ENCODE measurements at regions of chr2 and their contacts with region 1.

Region 1: GRCh38 chr2:126657636-126658318 is 1.8 kb downstream of the GYPC start:
- DNase-seq: peak; percentile 26
- H3K4me3 ChIP-seq: peak overlapping the region; percentile 45 to 56
- H3K27ac ChIP-seq: peak overlapping the region; percentile 85 to 94
- H3K4me1 ChIP-seq: no peaks in the 10 kb centered on the region
- H3K27me3 ChIP-seq: no peaks in the 10 kb centered on the region
- CTCF ChIP-seq: no peak
- POLR2A ChIP-seq: no peak

Region 2: GRCh38 chr2:126534478-126534877 is 123.3 kb before region 1 on chr2:
- intact Hi-C with region 1: no loop called
- DNase-seq: no peak
- H3K4me3 ChIP-seq: no peak overlapping the region
- H3K27ac ChIP-seq: no peak overlapping the region
- H3K4me1 ChIP-seq: no peaks in the 10 kb centered on the region
- H3K27me3 ChIP-seq: no peaks in the 10 kb centered on the region
- CTCF ChIP-seq: no peak
- POLR2A ChIP-seq: no peak

Region 3: DNA sequence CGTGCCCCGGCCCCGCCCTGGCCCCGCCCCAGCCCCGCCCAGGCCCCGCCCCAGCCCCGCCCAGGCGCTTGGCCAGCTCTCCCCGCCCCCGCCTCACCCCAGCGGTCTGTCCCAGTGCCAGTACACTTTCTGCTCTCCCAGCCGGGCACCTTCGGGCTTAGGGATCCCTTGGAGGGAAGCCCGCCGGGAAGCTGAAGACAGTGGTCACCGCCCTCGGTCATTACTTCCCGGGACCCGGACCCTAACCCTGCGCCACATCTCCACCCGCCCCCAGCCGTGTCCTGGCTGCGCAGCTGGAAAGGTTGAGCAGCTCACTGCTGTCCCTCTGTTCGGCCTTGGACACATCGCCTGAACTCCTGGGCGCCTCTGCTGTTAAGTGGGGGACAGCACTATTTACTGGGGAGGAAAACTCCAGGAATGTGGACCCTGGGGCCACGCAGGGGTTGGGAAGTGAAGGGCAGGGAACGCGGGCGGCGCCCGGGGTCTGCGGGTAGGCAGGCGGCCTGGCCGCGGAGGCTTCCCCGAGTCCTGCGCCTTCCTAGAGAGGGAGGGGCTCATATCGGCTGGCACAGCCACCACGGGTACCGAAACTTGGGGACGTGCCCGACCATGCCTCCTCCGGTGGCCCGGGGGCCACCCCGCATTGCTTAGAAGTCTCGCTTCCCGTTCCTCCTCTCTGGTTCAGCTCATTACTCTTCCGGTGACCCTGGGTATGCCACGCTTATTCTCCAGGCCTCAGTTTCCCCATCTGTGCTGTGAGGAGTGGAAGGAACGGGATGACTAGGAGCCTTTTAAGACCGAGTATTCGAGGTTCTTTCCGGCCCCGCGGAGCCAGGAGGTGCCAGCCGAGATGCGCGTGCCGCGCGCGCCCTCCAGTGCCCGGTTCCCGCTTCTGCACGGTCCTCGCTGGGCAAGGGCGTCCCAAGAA is 119.2 kb after region 1 on chr2:
- intact Hi-C with region 1: loop called (anchors 5 kb)
- DNase-seq: peak; percentile 63
- H3K4me3 ChIP-seq: peak overlapping the region; percentile 32 to 34
- H3K27ac ChIP-seq: peak overlapping the region in 1 of 2 donors; percentile 39
- H3K4me1 ChIP-seq: no peaks in the 10 kb centered on the region
- H3K27me3 ChIP-seq: no peaks in the 10 kb centered on the region
- CTCF ChIP-seq: peak; percentile 55 to 84 (median 72)
- POLR2A ChIP-seq: no peak

Region 4: GRCh38 chr2:126986631-126987187 is 328.9 kb after region 1 on chr2:
- intact Hi-C with region 1: no loop called
- DNase-seq: no peak
- H3K4me3 ChIP-seq: no peak overlapping the region
- H3K27ac ChIP-seq: no peak overlapping the region
- H3K4me1 ChIP-seq: no peaks in the 10 kb centered on the region
- H3K27me3 ChIP-seq: peaks cover 5% of the 10 kb centered on the region
- CTCF ChIP-seq: no peak
- POLR2A ChIP-seq: no peak

Region 5: DNA sequence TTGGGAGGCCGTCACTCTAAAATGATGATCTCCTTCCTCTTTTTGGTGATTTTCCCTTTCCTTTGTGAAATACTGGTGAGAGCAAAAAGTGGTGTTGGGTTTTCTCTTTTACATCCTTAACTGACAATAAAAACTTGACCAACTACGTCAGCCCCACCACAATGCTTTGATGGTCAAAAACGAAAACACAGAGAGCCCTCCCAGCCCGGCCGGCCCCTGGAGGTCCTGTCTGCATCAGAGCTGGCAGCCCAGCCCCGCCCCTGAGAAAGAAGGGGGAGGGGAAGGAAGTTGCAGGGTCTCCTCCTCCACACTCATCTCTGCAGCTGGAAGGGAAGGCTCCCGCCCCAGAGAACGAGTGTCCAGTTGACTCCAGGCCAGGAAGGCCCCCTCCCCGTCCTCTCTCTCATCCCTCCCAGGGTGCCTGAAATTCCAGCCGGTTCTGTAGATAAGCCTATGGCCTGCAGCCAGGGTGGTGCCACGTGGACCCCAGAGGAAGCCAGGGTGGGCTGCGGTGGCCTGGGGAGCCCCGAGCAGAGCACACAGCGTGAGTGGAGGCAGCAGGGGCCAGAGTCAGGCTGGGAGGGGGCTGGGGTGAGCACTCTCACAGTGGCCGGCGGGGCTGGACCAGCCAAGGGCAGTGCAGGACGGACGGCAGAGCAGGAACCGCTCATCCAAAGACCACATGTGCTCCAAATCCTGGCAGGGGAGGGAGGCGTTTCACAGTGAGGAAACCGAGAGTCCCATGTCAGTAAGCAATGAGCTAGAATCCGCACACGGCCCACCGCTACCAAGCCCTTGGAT is 429.4 kb after region 1 on chr2:
- intact Hi-C with region 1: loop called (anchors 10 kb)
- DNase-seq: no peak
- H3K4me3 ChIP-seq: no peak overlapping the region
- H3K27ac ChIP-seq: peak overlapping the region; percentile 69 to 70
- H3K4me1 ChIP-seq: peaks cover 18% of the 10 kb centered on the region
- H3K27me3 ChIP-seq: no peaks in the 10 kb centered on the region
- CTCF ChIP-seq: no peak
- POLR2A ChIP-seq: no peak

Measured in prostate gland (tissue), 2 donors.